ENCODE measurements at regions of chr20 and their contacts with region 1.

Region 1: DNA sequence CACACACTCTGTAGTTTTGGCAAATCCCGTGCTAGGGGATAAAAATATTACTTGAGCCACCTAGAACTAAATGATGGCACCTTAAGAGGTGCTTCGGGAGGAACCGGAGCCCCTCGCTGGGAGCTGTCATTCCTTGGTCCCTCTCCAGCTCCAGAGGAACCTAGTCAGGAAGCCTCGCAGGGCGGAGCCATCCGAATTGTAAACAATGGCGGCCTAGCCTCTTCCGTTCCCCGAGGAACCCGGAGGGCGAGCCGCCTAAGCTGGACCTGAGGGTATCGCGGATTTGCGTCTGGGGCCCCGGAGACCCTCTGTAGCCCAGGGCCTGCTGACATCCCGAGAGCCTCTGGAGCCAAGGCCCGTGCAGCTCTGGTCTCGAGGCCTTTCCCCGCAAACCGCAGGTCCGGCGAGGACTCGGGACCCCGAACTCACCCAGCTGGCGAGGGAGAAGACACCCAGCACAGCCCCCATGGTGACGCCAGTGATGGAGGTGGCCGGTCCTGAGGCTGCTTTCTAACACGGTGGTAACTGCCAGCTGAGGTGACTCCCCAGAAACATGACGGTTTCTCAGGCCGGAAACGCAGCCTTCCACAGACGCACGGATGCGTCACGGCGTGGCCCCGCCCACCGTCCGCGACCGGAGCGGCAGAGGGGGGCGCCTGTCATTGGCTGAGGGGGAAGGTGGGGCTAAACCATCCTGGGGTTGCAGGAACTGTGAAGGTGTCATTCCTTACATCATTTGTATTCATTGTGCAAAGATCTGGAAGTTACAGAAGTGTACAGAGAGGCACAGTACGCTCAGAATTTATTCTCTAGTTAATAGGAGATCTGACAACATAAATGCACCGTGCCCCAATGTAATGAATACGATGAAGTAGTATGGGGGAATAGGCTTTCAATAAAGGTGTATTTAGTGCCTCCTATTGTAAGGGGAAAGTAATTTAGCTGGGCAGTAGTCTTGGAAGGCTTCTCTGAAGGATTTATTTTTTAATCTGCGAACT is at the start of gene SERINC3:
- DNase-seq: peak; percentile 96
- H3K4me3 Mint-ChIP-seq: peak within 1 kb of the TSS; percentile 88
- H3K27ac Mint-ChIP-seq: peak within 1 kb of the TSS; percentile 89
- H3K4me1 Mint-ChIP-seq: peaks cover 43% of the 10 kb centered on the region
- H3K27me3 Mint-ChIP-seq: no peaks in the 10 kb centered on the region
- total RNA-seq, gene SERINC3: 51.3 and 54.6 TPM in 2 replicates

Region 2: DNA sequence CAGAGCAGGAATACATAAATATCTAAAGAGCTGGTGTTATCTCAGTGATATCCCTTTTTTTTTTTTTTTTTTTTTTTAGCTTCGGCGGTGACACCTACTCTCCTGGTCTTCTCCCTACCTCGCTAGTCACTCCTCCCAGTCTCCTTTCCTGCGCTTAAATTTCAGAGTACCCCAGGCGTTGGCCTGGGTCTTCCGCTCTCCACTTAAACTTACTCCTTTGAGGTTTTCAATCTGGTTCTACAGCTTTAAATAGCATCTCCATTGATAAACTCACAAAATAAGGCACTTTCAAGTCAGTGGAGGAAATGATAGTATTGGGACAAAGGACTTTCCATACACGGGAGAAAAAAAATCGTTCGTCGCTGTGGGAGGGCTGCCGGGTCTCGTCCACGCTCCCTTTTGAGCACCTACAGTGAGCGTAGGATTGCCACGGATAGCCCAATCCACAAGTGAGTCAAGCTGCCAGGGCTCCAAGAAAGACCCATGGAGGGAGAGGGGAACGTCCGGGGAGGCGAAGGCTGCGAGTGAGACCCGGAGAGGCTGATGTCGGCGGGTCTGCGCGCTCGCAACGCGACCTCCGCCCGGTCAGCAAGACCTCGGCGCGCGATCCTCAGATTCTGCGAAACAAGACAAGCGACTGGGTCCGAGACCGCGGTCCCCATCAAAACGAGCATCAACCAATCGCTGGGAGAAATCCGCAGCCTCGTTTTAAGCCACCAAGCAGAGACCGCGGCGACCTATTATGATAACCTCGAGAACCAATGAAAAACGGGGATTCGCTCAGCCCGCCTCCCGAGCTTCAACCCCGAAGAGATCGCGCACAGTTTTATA is 1064.8 kb before region 1 on chr20:
- intact Hi-C with region 1: loop called (anchors 5 kb)
- DNase-seq: peak; percentile 83
- H3K4me3 Mint-ChIP-seq: peak overlapping the region; percentile 88
- H3K27ac Mint-ChIP-seq: peak overlapping the region; percentile 100
- H3K4me1 Mint-ChIP-seq: peaks cover 34% of the 10 kb centered on the region
- H3K27me3 Mint-ChIP-seq: peaks cover 17% of the 10 kb centered on the region

Region 3: DNA sequence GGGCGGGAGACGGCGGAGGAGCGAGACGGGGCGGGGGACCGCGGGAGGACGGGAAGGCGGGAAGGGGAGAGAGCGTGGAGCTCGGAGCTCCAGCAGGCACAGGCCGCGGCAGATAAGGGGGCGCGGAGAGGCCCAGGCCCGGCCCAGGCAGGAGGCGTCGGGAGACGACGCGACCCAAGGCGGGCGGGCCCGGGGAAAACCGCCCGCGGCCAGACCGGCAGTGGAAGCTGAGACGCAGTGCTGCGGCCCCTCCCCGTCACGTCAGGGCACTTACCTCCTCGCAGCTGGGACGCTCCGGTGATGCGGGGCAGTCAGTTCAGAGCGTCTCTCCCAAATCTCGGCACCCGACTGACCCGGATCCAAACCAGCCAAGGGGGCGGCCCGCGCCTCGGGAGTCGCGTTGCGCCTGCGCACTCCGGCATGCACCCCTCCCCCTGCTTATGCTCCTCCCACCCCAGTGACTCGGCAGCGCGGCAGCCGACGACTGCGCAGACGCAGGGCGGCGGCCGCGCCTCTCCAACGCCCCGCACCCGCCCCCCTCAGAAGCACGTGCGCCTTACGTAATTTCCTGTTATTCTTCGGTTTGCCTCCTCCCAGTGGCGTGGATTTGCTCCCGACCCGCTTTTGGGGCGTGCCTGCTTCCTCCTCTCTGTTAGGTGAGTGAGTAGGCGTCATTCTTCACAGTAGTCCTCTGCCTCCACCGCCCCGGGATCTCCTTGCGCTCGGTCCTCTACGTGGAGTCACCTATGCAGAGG is 311.2 kb before region 1 on chr20 and contains the start of gene OSER1:
- intact Hi-C with region 1: loop called (anchors 1 kb)
- DNase-seq: peak; percentile 98
- H3K4me3 Mint-ChIP-seq: peak within 1 kb of the TSS; percentile 99
- H3K27ac Mint-ChIP-seq: peak within 1 kb of the TSS; percentile 98
- H3K4me1 Mint-ChIP-seq: peaks cover 59% of the 10 kb centered on the region
- H3K27me3 Mint-ChIP-seq: no peaks in the 10 kb centered on the region
- total RNA-seq, gene OSER1: 22.0 and 23.4 TPM in 2 replicates

Region 4: GRCh38 chr20:44388466-44389023 is 133.2 kb before region 1 on chr20:
- intact Hi-C with region 1: loop called (anchors 1 kb)
- DNase-seq: peak; percentile 57
- H3K4me3 Mint-ChIP-seq: peak overlapping the region; percentile 17
- H3K27ac Mint-ChIP-seq: no peak overlapping the region
- H3K4me1 Mint-ChIP-seq: peaks cover 5% of the 10 kb centered on the region
- H3K27me3 Mint-ChIP-seq: peaks cover 6% of the 10 kb centered on the region

Region 5: DNA sequence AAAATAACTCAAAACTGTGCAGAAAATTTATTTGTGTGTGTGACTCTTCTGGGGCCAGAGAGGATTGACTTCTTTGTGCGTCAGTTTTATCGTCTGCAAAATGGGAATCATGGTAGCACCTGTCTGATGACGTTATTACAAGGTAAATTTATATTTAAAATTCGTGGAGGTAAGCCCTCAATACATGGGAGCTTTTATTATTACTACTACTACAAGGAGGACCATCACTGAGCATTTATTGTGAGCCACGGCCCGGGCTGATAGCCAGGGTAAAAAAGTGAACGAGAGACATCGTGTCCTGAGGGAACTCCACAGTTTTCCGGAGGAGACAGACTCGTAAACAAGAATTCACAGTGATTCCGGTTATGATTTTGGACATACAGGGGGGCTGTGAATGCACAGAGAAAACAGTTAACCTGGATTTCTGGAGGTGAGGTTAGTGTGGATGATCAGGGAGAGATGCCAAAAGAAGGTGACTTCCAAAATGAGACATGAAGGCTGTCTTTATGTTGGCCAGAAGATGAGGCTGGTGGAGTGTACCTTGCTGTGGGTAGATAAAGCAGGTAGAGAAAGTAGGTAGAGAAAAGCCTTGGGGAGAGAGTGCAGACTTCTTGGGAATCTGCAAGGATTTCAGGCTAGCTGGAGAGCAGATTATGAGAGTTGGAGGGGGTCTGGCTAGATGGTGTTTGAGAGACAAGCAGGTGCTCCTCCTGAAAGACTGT is 10.6 kb after region 1 on chr20:
- intact Hi-C with region 1: loop called (anchors 1 kb)
- DNase-seq: no peak
- H3K4me3 Mint-ChIP-seq: no peak overlapping the region
- H3K27ac Mint-ChIP-seq: no peak overlapping the region
- H3K4me1 Mint-ChIP-seq: no peaks in the 10 kb centered on the region
- H3K27me3 Mint-ChIP-seq: peaks cover 5% of the 10 kb centered on the region

Region 6: DNA sequence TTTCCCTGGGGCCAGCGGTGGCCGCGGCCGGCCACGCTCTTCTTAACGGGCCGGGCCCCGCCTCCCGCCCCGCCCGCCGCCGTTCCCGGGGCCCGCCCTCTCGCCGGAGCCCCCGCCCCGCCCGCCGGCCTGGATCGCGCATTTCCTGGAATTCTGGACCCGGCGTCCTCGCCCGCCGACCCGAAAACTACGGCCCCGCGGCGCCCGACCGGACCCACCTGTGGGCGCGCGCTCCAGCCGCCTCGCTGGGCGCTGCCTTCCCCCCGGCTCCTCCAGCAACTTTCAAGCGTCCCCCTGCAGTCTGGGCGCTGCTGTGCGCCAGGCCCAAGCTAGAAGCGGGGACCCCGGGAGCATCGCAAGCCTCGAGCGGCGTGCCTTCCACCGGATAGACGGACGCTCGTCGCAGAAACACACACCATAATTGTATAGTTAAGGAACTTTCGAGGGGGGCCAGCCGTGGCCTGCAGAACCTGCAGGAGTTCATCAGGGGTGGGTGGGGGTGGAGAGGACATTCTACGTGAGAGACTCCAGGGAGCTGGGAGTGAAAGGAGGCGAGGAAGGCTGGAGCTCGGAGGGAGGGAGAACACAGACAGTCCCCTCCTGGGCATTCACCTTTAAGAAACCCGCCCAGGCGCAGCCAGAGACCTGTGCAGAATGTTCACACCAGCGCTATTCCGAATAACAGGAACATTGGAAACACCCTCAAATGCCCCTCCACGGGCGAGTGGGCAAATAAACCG is 130.1 kb after region 1 on chr20 and contains the start of gene ADA:
- intact Hi-C with region 1: loop called (anchors 5 kb)
- DNase-seq: peak; percentile 47
- H3K4me3 Mint-ChIP-seq: peak within 1 kb of the TSS; percentile 89
- H3K27ac Mint-ChIP-seq: peak within 1 kb of the TSS; percentile 94
- H3K4me1 Mint-ChIP-seq: peaks cover 58% of the 10 kb centered on the region
- H3K27me3 Mint-ChIP-seq: no peaks in the 10 kb centered on the region
- total RNA-seq, gene ADA: 45.1 and 45.5 TPM in 2 replicates